Natural killer cell (primary cell): ENCODE measurements at regions of chr1 and their contacts with region 1.

Region 1: DNA sequence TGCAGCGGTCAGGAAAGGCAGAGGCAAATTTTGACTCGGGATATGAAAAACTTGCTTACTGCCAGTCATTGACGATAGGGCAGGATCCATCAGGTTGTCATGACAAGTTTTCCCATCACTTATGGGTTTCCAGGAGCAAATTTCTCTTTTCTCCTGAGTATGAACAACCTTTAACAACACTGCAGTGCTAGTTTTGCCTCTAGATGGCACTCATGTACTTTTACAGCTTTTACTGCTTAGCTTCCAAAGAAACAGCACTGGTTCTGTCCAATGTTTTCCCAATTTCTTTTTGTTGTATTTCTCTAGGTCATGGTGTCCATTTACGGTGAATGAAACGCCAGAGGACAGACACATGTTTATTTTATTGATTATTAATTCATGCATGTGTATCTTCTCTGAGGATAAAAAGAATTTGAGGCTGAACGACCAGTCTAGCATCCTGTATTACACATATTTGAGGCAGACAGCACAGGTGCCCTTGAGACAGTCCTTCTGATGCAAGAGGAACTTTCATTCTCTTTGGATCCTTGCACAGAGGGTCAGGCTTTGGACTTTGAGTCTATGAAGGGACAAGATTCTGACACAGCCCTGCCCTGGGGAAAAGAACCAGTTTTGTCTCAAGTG is 112.3 kb upstream of the TRABD2B start:
- DNase-seq: peak in 1 of 2 donors; percentile 55
- ATAC-seq: no peak
- H3K4me3 ChIP-seq: no peak overlapping the region
- H3K4me3 Mint-ChIP-seq: no peak overlapping the region
- H3K27ac ChIP-seq: no peak overlapping the region
- H3K27ac Mint-ChIP-seq: no peak overlapping the region
- H3K4me1 ChIP-seq: no peaks in the 10 kb centered on the region
- H3K4me1 Mint-ChIP-seq: no peaks in the 10 kb centered on the region
- H3K27me3 ChIP-seq: peaks cover 2% of the 10 kb centered on the region
- H3K27me3 Mint-ChIP-seq: peaks cover 5 to 21% of the 10 kb centered on the region in 2 donors
- CTCF ChIP-seq: peak; percentile 69

Region 2: DNA sequence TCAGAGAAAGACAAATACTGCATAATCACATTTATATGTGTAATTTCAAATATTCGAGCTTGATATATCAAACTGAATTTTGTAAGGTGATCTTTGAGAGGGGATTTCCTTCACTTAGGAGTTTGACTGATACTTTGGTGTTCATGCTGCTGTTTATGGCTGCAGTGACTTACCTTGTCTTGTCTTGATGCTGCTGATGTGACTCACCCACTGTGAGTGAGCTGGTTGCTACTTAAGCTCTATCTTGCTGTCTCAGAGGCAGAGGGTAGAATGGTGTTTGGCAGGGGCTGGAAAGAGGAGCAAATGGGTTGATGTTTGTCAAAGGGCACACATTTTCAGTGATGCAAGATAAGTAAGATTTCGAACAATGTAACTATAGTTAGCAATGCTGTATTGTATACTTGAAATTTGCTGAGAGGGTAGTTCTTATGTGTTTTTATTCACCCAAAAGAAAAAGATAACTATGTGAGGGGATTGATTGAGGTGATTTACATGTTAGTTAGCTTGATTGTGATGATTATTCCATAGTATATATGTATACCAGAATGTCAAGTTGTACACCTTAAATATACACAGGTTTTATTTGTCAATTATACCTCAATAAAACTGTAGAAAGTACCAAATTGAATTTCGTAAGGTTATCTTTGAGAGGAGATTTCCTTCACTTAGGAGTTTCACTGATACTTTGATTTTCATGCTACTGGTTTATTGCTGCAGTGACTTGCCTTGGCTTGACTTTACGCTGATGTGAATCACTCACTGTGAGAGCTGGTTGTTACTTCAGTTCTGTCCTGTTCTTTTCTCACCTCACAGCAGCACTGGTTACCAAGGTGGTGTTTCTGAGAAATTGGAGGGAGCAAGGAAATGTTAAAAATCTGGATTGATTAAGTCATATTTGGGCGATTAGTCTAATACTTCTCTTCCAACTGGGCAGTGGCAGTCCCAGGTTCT is 18.5 kb after region 1 on chr1:
- intact Hi-C with region 1: no loop called
- DNase-seq: no peak
- ATAC-seq: no peak
- H3K4me3 ChIP-seq: no peak overlapping the region
- H3K4me3 Mint-ChIP-seq: no peak overlapping the region
- H3K27ac ChIP-seq: no peak overlapping the region
- H3K27ac Mint-ChIP-seq: no peak overlapping the region
- H3K4me1 ChIP-seq: no peaks in the 10 kb centered on the region
- H3K4me1 Mint-ChIP-seq: no peaks in the 10 kb centered on the region
- H3K27me3 ChIP-seq: no peaks in the 10 kb centered on the region
- H3K27me3 Mint-ChIP-seq: peaks cover 27 to 30% of the 10 kb centered on the region in 2 donors
- CTCF ChIP-seq: no peak

Region 3: GRCh38 chr1:48164571-48164970 is 55.1 kb after region 1 on chr1:
- intact Hi-C with region 1: no loop called
- DNase-seq: no peak
- ATAC-seq: no peak
- H3K4me3 ChIP-seq: no peak overlapping the region
- H3K4me3 Mint-ChIP-seq: no peak overlapping the region
- H3K27ac ChIP-seq: no peak overlapping the region
- H3K27ac Mint-ChIP-seq: no peak overlapping the region
- H3K4me1 ChIP-seq: no peaks in the 10 kb centered on the region
- H3K4me1 Mint-ChIP-seq: no peaks in the 10 kb centered on the region
- H3K27me3 ChIP-seq: no peaks in the 10 kb centered on the region
- H3K27me3 Mint-ChIP-seq: peaks cover 11 to 29% of the 10 kb centered on the region in 2 donors
- CTCF ChIP-seq: no peak

Region 4: GRCh38 chr1:48498096-48498791 is 388.7 kb after region 1 on chr1:
- intact Hi-C with region 1: loop called (anchors 1 kb)
- DNase-seq: peak; percentile 53 to 79
- ATAC-seq: peak; percentile 78 to 89 (median 82)
- H3K4me3 ChIP-seq: no peak overlapping the region
- H3K4me3 Mint-ChIP-seq: no peak overlapping the region
- H3K27ac ChIP-seq: no peak overlapping the region
- H3K27ac Mint-ChIP-seq: no peak overlapping the region
- H3K4me1 ChIP-seq: no peaks in the 10 kb centered on the region
- H3K4me1 Mint-ChIP-seq: peaks cover 6 to 10% of the 10 kb centered on the region in 2 donors
- H3K27me3 ChIP-seq: no peaks in the 10 kb centered on the region
- H3K27me3 Mint-ChIP-seq: no peaks in the 10 kb centered on the region
- CTCF ChIP-seq: peak; percentile 95

Region 5: GRCh38 chr1:48697066-48697707 is 587.7 kb after region 1 on chr1:
- intact Hi-C with region 1: loop called (anchors 2 kb)
- DNase-seq: peak; percentile 35 to 49
- ATAC-seq: peak in 1 of 3 donors; percentile 56
- H3K4me3 ChIP-seq: no peak overlapping the region
- H3K4me3 Mint-ChIP-seq: no peak overlapping the region
- H3K27ac ChIP-seq: no peak overlapping the region
- H3K27ac Mint-ChIP-seq: no peak overlapping the region
- H3K4me1 ChIP-seq: no peaks in the 10 kb centered on the region
- H3K4me1 Mint-ChIP-seq: no peaks in the 10 kb centered on the region
- H3K27me3 ChIP-seq: no peaks in the 10 kb centered on the region
- H3K27me3 Mint-ChIP-seq: peaks cover 0 to 7% of the 10 kb centered on the region in 2 donors
- CTCF ChIP-seq: peak; percentile 82